CD8-positive, alpha-beta memory T cell (primary cell): ENCODE measurements at regions of chr4 and their contacts with region 1.

Region 1: GRCh38 chr4:82428969-82429727 is 1.1 kb downstream of the HNRNPDL start:
- DNase-seq: peak; percentile 91 to 95 (median 93)
- H3K4me3 ChIP-seq: peak overlapping the region; percentile 97
- H3K4me3 Mint-ChIP-seq: peak overlapping the region; percentile 96 to 100 (median 100)
- H3K27ac ChIP-seq: peak overlapping the region; percentile 99
- H3K27ac Mint-ChIP-seq: peak overlapping the region; percentile 97 to 100 (median 99)
- H3K4me1 ChIP-seq: peaks cover 43% of the 10 kb centered on the region
- H3K4me1 Mint-ChIP-seq: peaks cover 66 to 82% (median 78%) of the 10 kb centered on the region in 3 donors
- H3K27me3 ChIP-seq: no peaks in the 10 kb centered on the region
- H3K27me3 Mint-ChIP-seq: peaks cover 0 to 4% of the 10 kb centered on the region in 2 donors

Region 2: GRCh38 chr4:82217986-82218715 is 211.0 kb before region 1 on chr4:
- CTCF ChIA-PET with region 1: no interaction called
- POLR2A ChIA-PET with region 1: no interaction called
- DNase-seq: no peak
- H3K4me3 ChIP-seq: no peak overlapping the region
- H3K4me3 Mint-ChIP-seq: no peak overlapping the region
- H3K27ac ChIP-seq: no peak overlapping the region
- H3K27ac Mint-ChIP-seq: no peak overlapping the region
- H3K4me1 ChIP-seq: peaks cover 13% of the 10 kb centered on the region
- H3K4me1 Mint-ChIP-seq: peaks cover 8 to 19% (median 12%) of the 10 kb centered on the region in 3 donors
- H3K27me3 ChIP-seq: no peaks in the 10 kb centered on the region
- H3K27me3 Mint-ChIP-seq: peaks cover 0 to 7% of the 10 kb centered on the region in 2 donors

Region 3: DNA sequence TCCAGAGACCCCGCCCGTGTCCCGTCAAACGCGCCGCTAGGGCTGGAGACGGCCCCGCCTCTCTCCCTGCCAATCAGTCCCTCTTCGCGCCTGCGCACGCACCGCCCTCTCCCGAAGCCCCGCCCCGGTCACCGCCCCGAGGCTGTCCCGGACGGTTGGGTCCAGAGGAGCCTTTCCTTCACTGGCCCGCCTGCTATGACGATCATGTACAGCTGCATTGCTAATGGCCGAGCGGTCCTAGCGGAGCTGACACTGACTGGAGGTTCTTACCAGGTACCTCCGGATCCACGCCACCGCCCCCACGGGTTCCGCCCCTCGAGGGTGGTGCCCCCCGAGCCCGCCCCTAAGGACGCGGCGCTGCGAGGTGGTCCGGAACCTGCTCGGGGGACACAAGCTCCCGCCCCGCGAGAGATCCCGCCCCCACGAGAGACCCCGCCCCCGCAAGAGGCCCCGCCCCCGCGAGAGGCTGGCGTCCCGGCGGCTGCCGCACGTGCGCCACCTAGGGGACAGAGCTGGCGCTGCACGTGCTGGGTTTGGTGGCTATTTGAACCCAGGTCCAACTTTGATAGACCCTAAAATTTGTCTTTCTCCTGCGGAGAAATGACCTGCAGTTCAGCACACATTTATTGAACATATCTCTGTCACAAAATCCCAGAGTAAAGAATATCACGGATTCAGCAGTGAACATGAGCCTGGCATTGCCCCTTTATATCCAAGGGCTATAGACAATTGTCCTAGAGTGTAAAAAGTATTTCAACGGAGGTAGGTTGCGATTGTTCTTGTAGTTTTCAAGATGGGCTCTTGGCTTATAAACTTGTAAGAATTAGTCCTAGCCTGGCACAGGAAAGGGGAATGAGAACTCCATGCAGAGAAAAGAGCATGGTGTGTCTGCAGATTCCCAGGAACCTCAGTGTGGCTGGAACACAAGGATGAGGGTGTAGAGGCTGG is 144.0 kb before region 1 on chr4:
- CTCF ChIA-PET with region 1: interaction called, 15 read pairs
- POLR2A ChIA-PET with region 1: interaction called, 17 read pairs
- DNase-seq: peak; percentile 98 to 100 (median 99)
- H3K4me3 ChIP-seq: peak overlapping the region; percentile 62
- H3K4me3 Mint-ChIP-seq: peak overlapping the region; percentile 48 to 93 (median 86)
- H3K27ac ChIP-seq: peak overlapping the region; percentile 38
- H3K27ac Mint-ChIP-seq: peak overlapping the region; percentile 2 to 89 (median 66)
- H3K4me1 ChIP-seq: peaks cover 5% of the 10 kb centered on the region
- H3K4me1 Mint-ChIP-seq: peaks cover 13 to 17% (median 14%) of the 10 kb centered on the region in 3 donors
- H3K27me3 ChIP-seq: no peaks in the 10 kb centered on the region
- H3K27me3 Mint-ChIP-seq: no peaks in the 10 kb centered on the region

Region 4: GRCh38 chr4:82360298-82361177 is 68.6 kb before region 1 on chr4:
- CTCF ChIA-PET with region 1: interaction called, 17 read pairs
- POLR2A ChIA-PET with region 1: interaction called, 11 read pairs
- DNase-seq: peak in 2 of 5 donors; percentile 26 to 27
- H3K4me3 ChIP-seq: no peak overlapping the region
- H3K4me3 Mint-ChIP-seq: peak overlapping the region in 2 of 7 donors; percentile 24 to 28
- H3K27ac ChIP-seq: no peak overlapping the region
- H3K27ac Mint-ChIP-seq: peak overlapping the region; percentile 28 to 91 (median 50)
- H3K4me1 ChIP-seq: peaks cover 95% of the 10 kb centered on the region
- H3K4me1 Mint-ChIP-seq: peaks cover 85 to 98% (median 97%) of the 10 kb centered on the region in 3 donors
- H3K27me3 ChIP-seq: no peaks in the 10 kb centered on the region
- H3K27me3 Mint-ChIP-seq: peaks cover 0 to 1% of the 10 kb centered on the region in 2 donors

Region 5: DNA sequence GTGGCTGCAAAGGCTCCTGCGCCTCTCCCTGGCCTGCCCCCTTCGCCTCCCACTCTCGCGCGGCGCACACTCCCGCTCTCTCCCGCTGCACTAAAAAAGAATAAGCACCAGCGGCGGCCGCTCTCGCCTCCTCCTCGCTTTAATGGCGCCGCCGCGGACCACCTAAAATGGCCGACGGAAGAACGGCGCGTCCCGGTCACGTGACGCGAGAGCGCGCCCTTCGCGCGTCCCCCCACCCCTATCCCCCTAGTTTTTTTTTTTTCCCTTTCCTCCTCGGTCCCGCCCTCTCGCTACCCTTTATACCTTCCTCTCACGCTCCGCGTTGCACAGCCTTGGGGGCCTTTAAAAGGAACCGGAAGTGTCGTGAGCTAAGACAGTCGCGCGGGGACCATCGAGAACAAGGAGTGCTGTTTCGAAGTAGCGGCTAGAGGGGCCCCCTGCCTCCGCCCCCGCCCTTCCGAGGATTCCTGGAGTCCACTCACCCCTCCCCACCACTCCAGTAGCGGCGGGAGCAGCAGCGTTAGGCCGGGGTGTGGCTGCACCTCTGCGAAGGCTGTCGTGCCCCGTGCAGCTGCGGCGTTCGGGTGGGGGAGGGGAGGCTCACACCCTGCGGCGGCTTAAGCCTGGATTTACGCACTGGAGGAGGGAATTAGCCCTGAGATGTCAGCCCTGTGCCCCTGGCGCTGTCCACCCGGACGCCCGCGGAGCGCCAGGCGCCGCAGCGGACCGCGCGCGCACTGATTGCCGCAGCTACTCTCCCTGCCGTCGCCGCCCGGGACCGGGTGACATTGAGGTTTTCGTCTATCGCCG is 55.1 kb before region 1 on chr4 and contains the start of gene HNRNPD:
- CTCF ChIA-PET with region 1: interaction called, 31 read pairs
- POLR2A ChIA-PET with region 1: interaction called, 102 read pairs
- DNase-seq: peak; percentile 82 to 96 (median 93)
- H3K4me3 ChIP-seq: peak within 1 kb of the TSS; percentile 78
- H3K4me3 Mint-ChIP-seq: peak within 1 kb of the TSS; percentile 94 to 99 (median 98)
- H3K27ac ChIP-seq: peak within 1 kb of the TSS; percentile 92
- H3K27ac Mint-ChIP-seq: peak within 1 kb of the TSS; percentile 96 to 100 (median 99)
- H3K4me1 ChIP-seq: peaks cover 46% of the 10 kb centered on the region
- H3K4me1 Mint-ChIP-seq: peaks cover 44 to 62% (median 59%) of the 10 kb centered on the region in 3 donors
- H3K27me3 ChIP-seq: no peaks in the 10 kb centered on the region
- H3K27me3 Mint-ChIP-seq: peaks cover 0 to 11% of the 10 kb centered on the region in 2 donors
- total RNA-seq, gene HNRNPD: 452 to 475 TPM

Region 6: GRCh38 chr4:83034630-83035494 is 605.7 kb after region 1 on chr4 and contains the start of gene COPS4:
- CTCF ChIA-PET with region 1: no interaction called
- POLR2A ChIA-PET with region 1: interaction called, 13 read pairs
- DNase-seq: peak; percentile 92 to 98 (median 94)
- H3K4me3 ChIP-seq: peak within 1 kb of the TSS; percentile 63
- H3K4me3 Mint-ChIP-seq: peak within 1 kb of the TSS; percentile 92 to 100 (median 99)
- H3K27ac ChIP-seq: peak within 1 kb of the TSS; percentile 74
- H3K27ac Mint-ChIP-seq: peak within 1 kb of the TSS; percentile 89 to 99 (median 98)
- H3K4me1 ChIP-seq: peaks cover 18% of the 10 kb centered on the region
- H3K4me1 Mint-ChIP-seq: peaks cover 35 to 48% (median 44%) of the 10 kb centered on the region in 3 donors
- H3K27me3 ChIP-seq: no peaks in the 10 kb centered on the region
- H3K27me3 Mint-ChIP-seq: no peaks in the 10 kb centered on the region
- total RNA-seq, gene COPS4: 38.4 to 38.5 TPM